AG04449 (cell line): ENCODE measurements at regions of chr22 and their contacts with region 1.

Region 1: DNA sequence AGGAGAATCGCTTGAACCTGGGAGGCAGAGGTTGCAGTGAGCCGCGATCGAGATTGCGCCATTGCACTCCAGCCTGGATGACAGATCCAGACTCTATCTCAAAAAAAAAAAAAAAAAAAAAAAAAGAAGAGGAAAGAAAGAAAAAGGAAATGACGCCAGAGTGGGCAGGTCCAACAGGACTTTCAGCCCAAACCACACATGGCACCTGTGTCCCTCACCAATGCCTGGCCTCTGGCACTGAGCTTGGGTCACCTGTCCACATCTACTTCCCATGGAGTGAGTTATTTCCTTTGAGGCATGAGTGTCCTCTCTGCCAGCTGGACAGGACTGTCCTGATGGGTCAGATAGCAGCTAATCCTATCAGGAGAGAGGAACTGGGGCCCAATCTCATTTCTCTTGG is 15.2 kb upstream of the GCAT start:
- DNase-seq: no peak
- H3K4me3 ChIP-seq: no peak overlapping the region
- CTCF ChIP-seq: no peak

Region 2: GRCh38 chr22:37148742-37149665 is 643.5 kb before region 1 on chr22:
- CTCF ChIA-PET with region 1: no interaction called
- POLR2A ChIA-PET with region 1: no interaction called
- DNase-seq: no peak
- H3K4me3 ChIP-seq: no peak overlapping the region
- CTCF ChIP-seq: no peak

Region 3: DNA sequence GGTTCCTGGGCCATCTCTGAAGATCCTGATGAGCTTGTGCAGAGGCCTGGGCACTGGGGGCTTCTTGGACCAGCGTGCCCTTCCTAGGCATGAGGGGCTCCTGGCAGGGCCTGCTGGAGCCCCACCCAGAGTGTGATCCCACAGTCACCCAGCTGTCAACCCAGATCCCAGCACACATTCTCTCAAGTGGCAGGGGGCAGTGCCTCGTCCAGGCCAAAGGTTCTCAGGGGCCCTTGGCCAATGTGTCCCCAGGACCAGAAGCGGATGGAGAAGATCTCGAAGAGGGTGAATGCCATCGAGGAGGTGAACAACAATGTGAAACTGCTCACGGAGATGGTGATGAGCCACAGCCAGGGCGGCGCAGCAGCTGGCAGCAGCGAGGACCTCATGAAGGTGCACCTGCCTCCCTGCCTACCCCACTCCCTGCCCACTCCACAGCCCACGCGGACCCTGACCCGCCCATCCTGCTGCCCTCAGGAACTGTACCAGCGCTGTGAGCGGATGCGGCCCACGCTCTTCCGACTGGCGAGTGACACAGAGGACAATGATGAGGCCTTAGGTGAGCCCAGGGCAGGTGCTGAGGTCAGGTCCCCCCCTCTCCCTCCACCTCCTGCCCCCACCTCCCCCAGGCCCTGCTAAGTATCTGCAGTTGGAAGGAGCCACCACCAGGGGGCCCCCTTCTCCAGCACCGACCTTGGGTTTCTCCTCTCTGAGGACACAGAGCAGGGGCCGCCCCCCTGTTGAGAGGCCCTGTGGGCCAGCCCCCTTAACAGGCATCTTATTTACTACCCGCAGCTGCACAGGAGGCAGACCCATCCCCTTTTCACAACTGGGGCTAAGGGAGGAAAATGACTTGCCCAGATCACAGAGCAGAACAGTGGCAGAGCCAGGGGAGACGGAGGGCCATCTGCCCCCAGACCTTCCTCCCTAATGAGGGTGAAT is 169.1 kb before region 1 on chr22:
- CTCF ChIA-PET with region 1: interaction called, 10 read pairs
- POLR2A ChIA-PET with region 1: no interaction called
- DNase-seq: no peak
- H3K4me3 ChIP-seq: no peak overlapping the region
- CTCF ChIP-seq: peak; percentile 88

Region 4: GRCh38 chr22:37777122-37777687 is 15.3 kb before region 1 on chr22:
- CTCF ChIA-PET with region 1: interaction called, 31 read pairs
- POLR2A ChIA-PET with region 1: no interaction called
- DNase-seq: no peak
- H3K4me3 ChIP-seq: no peak overlapping the region
- CTCF ChIP-seq: no peak

Region 5: DNA sequence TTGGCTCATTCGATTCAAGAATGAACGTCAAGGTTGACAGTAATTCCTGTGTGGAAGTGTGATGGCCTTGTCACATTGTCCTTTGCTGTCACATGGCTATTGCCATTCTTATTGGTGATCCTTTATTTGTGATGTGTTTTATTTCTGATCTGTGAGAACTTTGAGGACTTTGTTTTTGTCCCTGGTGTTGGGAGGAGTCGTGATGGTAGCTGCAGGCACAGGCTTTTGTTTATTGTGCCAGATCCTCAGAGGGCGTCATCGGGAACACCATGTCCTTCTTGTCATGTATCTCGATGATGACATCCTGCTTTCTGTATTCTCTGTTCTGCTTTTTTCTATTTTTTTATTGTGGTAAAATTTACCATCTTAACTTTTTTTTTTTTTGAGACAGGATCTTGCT is 270.3 kb after region 1 on chr22:
- CTCF ChIA-PET with region 1: no interaction called
- POLR2A ChIA-PET with region 1: no interaction called
- DNase-seq: no peak
- H3K4me3 ChIP-seq: no peak overlapping the region
- CTCF ChIP-seq: no peak